Colonic mucosa (tissue), 4 donors: ENCODE measurements at regions of chr9 and their contacts with region 1.

Region 1: GRCh38 chr9:76704593-76705204 is 59.5 kb upstream of the PCA3 start:
- DNase-seq: no peak
- H3K4me3 ChIP-seq: no peak overlapping the region
- H3K27ac ChIP-seq: no peak overlapping the region
- H3K4me1 ChIP-seq: no peaks in the 10 kb centered on the region
- H3K27me3 ChIP-seq: no peaks in the 10 kb centered on the region
- CTCF ChIP-seq: peak; percentile 50

Region 2: DNA sequence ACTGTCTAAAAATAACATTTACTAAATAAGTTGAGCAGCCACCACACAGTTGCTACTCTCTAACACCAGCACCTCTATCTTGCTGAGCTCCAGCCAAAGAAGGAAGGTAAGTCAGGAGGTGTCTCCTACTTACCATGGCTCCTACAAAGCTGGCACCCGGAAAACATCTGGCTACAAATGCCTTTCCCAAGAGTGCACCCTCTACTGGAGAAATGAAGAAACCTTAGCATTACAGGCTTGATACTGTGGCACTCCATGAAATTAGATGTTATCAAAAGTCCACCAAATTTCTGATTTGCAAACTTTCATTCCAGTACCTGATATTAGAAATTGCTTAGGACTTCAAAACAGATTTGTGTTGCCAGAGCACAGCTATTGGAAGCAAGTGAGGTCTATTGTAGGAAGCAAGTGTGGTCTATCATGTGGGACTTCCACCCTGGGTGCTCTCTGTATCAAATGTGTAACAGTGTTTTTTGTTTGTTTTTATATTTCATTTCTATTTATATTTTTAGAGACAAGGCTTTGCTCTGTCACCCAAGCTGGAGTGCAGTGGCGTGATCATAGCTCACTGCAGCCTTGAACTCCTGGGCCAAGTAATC is 284.8 kb before region 1 on chr9:
- intact Hi-C with region 1: no loop called
- DNase-seq: peak; percentile 31
- H3K4me3 ChIP-seq: no peak overlapping the region
- H3K27ac ChIP-seq: no peak overlapping the region
- H3K4me1 ChIP-seq: no peaks in the 10 kb centered on the region
- H3K27me3 ChIP-seq: no peaks in the 10 kb centered on the region
- CTCF ChIP-seq: peak; percentile 43

Region 3: DNA sequence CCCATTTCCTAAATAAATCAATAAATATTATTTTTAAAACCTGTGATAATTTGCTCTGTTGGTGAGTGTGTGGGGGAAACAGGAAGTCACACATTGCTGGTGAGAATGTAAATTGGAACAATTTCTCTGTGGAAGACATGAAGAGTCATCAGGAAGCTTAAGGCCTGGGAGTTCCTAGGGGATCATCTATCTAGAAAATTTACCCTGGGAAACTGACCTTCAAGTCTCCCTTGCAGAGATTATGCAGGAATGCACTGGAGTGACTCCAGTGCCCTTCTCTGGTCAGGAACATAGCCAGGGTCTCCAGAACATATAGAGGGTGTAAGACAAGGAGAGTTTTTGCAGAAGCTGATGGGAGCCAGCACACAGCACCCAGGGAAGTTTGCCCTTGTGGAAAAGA is 258.7 kb before region 1 on chr9:
- intact Hi-C with region 1: loop called (anchors 5 kb)
- DNase-seq: no peak
- H3K4me3 ChIP-seq: no peak overlapping the region
- H3K27ac ChIP-seq: no peak overlapping the region
- H3K4me1 ChIP-seq: no peaks in the 10 kb centered on the region
- H3K27me3 ChIP-seq: no peaks in the 10 kb centered on the region
- CTCF ChIP-seq: no peak

Region 4: DNA sequence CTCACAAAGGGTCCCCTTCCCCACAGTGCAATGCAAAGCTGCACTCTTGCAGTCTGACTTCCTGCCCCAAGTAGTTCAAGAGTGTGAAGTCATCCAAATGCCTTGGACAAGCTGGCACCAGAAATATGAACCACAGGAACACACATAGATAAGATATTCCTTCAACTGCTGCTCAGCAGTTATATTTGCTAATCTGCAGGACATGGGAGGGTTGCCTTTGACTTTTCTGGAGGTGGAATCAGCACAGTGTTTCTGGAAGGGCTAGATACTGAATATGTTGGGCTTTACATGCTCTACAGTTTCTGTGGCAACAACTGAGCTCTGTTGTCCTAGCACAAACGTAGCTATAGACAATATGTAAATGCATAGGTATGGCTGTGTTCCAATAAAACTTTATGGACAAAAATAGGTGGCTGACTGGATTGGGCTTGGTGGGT is 37.2 kb before region 1 on chr9:
- intact Hi-C with region 1: loop called (anchors 5 kb)
- DNase-seq: no peak
- H3K4me3 ChIP-seq: no peak overlapping the region
- H3K27ac ChIP-seq: no peak overlapping the region
- H3K4me1 ChIP-seq: no peaks in the 10 kb centered on the region
- H3K27me3 ChIP-seq: no peaks in the 10 kb centered on the region
- CTCF ChIP-seq: no peak